Activated CD4-positive, alpha-beta T cell treated with anti-CD3 and anti-CD28 coated beads, Interleukin-2, amount 10 ng/mL, durations not matched to agents 7 days and 5 days (primary cell): ENCODE measurements at regions of chr1 and their contacts with region 1.

Region 1: DNA sequence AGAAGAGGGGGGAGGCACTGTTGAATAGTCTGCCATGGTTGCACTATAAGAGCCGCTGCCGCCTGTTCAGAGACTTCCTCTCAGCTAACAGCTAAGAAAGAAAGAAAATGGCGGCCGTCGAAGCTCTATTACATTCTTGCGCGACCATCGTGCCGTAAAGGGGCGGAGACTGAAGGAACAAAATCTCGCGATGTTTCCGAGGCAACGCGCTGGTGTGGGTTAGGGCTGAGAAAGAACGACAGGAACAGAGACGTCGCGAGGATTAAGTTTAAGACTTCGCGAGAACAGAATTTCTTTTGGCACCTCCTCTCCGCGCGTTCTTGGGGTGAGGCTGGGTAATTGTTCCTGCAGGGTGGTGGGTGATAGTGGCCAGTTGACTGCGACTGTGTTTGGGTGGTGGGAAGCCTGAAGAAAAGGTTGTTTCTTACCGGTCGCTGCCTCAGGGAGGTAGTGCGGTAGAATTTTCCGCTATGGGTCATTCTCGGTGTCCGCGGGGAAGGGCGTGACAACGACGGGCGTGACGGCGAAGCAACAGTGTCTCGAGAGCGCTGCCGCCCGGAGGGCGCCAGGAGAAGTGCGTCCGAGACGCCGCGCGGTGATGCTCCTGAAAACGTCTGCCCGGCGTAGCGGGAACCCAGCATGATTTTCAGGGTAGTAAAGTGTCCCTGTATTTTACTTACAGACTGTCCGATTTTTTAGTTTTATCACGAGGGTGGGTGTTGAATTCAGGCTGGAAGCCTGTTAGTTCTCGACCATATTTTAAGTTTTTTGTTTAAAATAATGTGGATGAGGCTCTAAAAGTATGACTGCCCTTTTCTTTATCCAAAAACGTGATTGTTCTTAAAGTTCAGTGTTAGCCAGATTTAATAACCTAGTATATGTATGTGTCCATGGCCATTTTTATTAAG is at the start of gene FUBP1:
- DNase-seq: peak; percentile 98
- H3K4me3 Mint-ChIP-seq: no peak within 1 kb of the TSS
- H3K27ac Mint-ChIP-seq: no peak within 1 kb of the TSS
- H3K4me1 Mint-ChIP-seq: peaks cover 41% of the 10 kb centered on the region
- H3K27me3 Mint-ChIP-seq: no peaks in the 10 kb centered on the region
- total RNA-seq, gene FUBP1: 193 to 217 TPM

Region 2: GRCh38 chr1:77994117-77994705 is 15.0 kb after region 1 on chr1:
- CTCF ChIA-PET with region 1: interaction called, 10 read pairs
- POLR2A ChIA-PET with region 1: no interaction called
- DNase-seq: no peak
- H3K4me3 Mint-ChIP-seq: no peak overlapping the region
- H3K27ac Mint-ChIP-seq: no peak overlapping the region
- H3K4me1 Mint-ChIP-seq: peaks cover 16% of the 10 kb centered on the region
- H3K27me3 Mint-ChIP-seq: no peaks in the 10 kb centered on the region

Region 3: DNA sequence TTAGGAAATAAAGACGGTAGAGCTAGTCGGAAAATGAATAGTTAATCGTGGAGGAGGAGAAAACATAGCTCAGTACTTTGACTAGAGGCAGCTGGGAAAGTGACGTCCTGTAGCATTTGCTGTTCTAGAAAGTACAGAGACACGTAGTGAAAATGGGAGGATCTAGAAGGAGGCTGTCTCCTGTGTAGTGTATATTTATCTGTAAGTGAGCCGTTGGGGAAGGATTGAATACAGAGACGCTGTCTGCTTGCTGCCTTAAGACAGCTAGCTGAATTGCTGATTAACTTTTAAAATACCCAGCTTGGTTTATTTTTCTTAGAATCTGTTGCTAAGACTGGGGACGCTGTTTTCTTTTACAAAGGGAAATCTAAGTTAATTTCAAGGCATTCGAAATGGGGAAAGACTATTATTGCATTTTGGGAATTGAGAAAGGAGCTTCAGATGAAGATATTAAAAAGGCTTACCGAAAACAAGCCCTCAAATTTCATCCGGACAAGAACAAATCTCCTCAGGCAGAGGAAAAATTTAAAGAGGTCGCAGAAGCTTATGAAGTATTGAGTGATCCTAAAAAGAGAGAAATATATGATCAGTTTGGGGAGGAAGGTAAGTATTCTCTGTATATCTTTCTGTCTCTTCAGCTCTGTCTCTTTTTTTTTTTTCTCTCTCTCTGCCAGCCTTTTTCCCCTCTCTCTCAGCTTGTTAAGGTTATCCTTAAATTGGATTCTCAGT is 25.7 kb after region 1 on chr1 and contains the start of gene DNAJB4:
- CTCF ChIA-PET with region 1: interaction called, 11 read pairs
- POLR2A ChIA-PET with region 1: interaction called, 64 read pairs
- DNase-seq: peak; percentile 86
- H3K4me3 Mint-ChIP-seq: peak within 1 kb of the TSS; percentile 88
- H3K27ac Mint-ChIP-seq: peak within 1 kb of the TSS; percentile 98
- H3K4me1 Mint-ChIP-seq: peaks cover 38% of the 10 kb centered on the region
- H3K27me3 Mint-ChIP-seq: peaks cover 1% of the 10 kb centered on the region
- total RNA-seq, gene DNAJB4: 11.5 to 13.2 TPM

Region 4: DNA sequence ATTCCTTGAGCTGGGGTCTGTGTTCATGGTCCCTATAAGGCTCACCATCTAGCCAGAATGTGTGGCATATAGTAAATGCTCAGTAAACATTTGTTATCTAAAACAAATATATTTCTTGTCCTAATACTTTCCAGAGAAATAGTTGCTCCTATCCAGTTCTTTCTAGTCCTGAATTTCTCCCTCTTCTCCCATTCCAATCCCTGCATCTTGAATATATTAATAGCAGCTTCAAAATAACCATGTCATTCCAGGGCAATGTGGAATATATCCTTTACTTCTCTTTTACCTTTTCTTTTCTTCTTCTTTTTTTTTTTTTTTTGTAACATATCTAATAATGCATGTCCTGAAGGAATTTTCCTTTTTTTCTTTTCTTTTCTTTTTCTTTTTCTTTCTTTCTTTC is 35.9 kb after region 1 on chr1:
- CTCF ChIA-PET with region 1: no interaction called
- POLR2A ChIA-PET with region 1: no interaction called
- DNase-seq: no peak
- H3K4me3 Mint-ChIP-seq: no peak overlapping the region
- H3K27ac Mint-ChIP-seq: no peak overlapping the region
- H3K4me1 Mint-ChIP-seq: no peaks in the 10 kb centered on the region
- H3K27me3 Mint-ChIP-seq: no peaks in the 10 kb centered on the region

Region 5: DNA sequence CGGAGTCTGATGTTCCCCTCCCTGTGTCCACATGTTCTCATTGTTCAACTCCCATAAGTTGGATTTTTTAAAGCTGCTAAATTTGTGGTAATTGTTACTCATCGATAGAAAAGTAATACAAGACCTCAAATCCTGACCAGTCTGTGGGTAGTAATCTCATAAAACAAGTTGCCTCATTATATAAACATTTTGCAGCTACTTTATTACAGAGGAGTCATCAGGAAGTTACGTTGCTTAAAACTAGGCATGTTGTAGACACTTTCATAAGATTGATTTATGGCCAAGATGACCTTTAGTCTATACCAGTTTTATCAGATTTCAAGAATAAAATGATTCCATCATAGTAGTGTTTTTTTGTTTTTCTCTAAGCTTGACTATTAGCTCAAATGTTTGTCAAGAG is 275.3 kb after region 1 on chr1:
- CTCF ChIA-PET with region 1: no interaction called
- POLR2A ChIA-PET with region 1: no interaction called
- DNase-seq: no peak
- H3K4me3 Mint-ChIP-seq: no peak overlapping the region
- H3K27ac Mint-ChIP-seq: no peak overlapping the region
- H3K4me1 Mint-ChIP-seq: no peaks in the 10 kb centered on the region
- H3K27me3 Mint-ChIP-seq: peaks cover 2% of the 10 kb centered on the region

Region 6: GRCh38 chr1:78323311-78323710 is 344.1 kb after region 1 on chr1:
- CTCF ChIA-PET with region 1: no interaction called
- POLR2A ChIA-PET with region 1: no interaction called
- DNase-seq: no peak
- H3K4me3 Mint-ChIP-seq: no peak overlapping the region
- H3K27ac Mint-ChIP-seq: no peak overlapping the region
- H3K4me1 Mint-ChIP-seq: no peaks in the 10 kb centered on the region
- H3K27me3 Mint-ChIP-seq: no peaks in the 10 kb centered on the region